Lower lobe of right lung (tissue), 2 donors: ENCODE measurements at regions of chr15 and their contacts with region 1.

Region 1: GRCh38 chr15:92521624-92522008 is 127.9 kb downstream of the ST8SIA2 start:
- DNase-seq: peak; percentile 52
- ATAC-seq: peak; percentile 95 to 97
- H3K4me3 ChIP-seq: no peak overlapping the region
- H3K27ac ChIP-seq: no peak overlapping the region
- H3K4me1 ChIP-seq: no peaks in the 10 kb centered on the region
- H3K27me3 ChIP-seq: no peaks in the 10 kb centered on the region
- CTCF ChIP-seq: peak; percentile 67

Region 2: GRCh38 chr15:92306663-92307062 is 215.0 kb before region 1 on chr15:
- intact Hi-C with region 1: no loop called
- DNase-seq: no peak
- ATAC-seq: no peak
- H3K4me3 ChIP-seq: no peak overlapping the region
- H3K27ac ChIP-seq: no peak overlapping the region
- H3K4me1 ChIP-seq: no peaks in the 10 kb centered on the region
- H3K27me3 ChIP-seq: peaks cover 6% of the 10 kb centered on the region
- CTCF ChIP-seq: no peak

Region 3: DNA sequence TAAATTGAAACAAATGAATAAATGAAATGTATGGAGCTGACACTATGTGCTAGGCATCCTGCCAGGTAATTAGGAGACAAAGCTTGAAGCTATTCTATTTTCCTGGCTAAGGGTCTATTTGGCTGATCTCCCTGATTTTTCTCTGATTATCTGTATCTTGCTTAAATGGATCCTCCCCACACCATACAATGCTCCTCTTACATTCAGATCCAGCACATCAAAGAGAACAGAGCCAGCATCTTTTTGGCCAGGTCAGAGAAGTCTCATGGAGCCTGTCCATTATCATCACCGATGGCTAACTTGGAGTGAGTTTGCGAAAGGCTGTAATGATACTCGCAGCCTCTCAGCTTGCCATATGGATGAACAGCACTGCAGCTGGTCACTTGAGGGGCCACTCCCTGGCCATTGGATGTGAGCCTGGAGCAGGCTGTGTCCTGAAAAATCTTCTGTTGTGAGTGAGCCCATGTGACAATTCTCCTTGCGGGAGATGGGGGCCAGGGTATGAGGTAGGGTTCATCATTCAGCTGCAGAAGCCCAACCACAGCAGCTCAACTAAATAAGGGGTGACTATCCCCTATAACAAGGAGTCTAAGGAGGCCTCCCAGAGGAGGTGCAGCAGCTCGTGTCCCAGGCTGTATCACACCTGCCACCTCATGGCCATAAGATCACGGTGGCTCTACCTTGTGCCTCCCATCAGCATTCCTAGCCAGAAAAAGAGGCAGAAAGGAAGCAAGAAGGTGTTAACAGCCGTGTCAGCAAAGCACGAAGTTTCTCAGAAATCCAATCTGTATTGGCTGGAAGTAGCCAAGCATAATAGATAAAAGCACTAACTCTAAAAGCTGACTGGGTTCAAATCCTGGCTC is 197.3 kb before region 1 on chr15:
- intact Hi-C with region 1: no loop called
- DNase-seq: no peak
- ATAC-seq: no peak
- H3K4me3 ChIP-seq: no peak overlapping the region
- H3K27ac ChIP-seq: no peak overlapping the region
- H3K4me1 ChIP-seq: no peaks in the 10 kb centered on the region
- H3K27me3 ChIP-seq: peaks cover 3% of the 10 kb centered on the region
- CTCF ChIP-seq: no peak

Region 4: DNA sequence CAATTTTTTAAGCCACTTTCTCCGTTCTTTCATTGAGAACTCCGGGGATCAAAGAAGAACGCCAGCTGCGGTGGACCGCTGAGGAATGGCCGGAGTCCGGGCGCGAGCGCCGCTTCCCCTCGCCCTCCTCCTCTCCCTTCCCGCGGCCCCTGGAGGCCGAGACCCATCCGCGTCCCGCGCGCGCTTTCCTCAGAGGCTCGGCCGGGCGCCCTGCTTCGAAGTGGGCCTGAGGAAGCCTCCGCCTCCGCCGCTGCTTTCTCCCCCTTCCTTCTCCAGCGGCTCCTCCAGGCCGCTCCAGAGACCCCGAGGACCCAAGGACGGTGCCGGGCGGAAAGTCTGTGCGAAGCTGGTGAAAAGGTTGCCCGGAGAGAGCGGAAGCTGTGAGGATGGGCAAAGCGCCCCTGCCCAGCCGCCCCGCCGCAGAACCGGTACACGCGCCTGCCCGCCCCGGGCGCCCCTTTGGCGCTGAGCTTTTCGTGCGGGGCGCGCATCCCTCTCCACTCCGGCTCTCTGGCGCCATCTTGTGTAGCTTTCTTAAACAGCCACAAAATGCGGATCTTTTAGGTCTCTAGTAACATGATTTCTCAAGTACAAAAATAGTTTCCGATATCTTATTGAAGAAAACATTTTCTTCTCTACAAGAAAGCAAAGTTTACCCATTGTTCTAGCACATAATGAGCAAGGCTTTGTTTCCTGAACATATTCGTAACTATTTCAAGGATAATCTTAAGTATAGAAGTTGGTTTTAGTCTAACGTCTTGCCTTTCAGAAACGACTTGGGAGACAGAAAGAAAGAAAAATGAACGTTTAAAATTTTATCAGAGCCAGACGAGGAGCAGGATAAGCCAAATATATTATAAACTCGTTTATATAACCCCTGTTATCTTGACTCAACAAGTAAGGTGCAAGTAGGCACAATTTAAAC is 193.1 kb after region 1 on chr15:
- intact Hi-C with region 1: loop called (anchors 10 kb)
- DNase-seq: peak; percentile 75
- ATAC-seq: peak; percentile 96 to 97
- H3K4me3 ChIP-seq: peak overlapping the region; percentile 68
- H3K27ac ChIP-seq: peak overlapping the region; percentile 70
- H3K4me1 ChIP-seq: peaks cover 15% of the 10 kb centered on the region
- H3K27me3 ChIP-seq: no peaks in the 10 kb centered on the region
- CTCF ChIP-seq: peak; percentile 81